ENCODE measurements at regions of chrX and their contacts with region 1.

Region 1: DNA sequence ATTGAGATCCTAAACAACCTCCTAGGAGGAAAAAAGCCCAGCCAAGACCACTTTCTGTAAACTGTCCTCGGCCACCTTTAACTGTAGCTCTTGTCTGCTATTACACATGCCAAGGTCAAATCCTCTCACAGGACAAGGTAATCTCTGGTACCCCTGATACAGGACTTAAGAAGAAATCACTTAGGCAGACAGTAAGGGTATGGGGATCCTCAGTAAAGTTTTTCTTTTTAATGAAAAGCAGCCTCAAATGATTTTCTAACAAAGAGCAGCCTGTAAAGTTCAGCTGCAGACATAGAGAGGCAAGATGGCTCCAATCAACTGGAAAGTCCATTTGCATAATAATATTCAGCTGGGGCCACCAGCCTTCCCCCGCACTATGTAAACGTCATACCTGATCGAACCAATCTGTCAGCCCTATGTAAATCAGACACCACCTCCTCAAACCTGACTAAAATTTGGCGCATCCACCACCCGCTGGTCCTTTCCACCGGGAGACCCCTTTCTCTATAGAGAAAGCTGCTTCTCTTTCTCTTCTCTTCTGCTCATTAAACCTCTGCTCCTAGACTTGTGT is 14.6 kb upstream of the MPP1 start:
- DNase-seq: peak in 2 of 4 experiments; percentile 44 to 83
- ATAC-seq: peak; percentile 73
- H3K4me3 ChIP-seq: no peak overlapping the region; the same call in 1 of the 2 replicates
- H3K27ac ChIP-seq: peak overlapping the region; percentile 97
- H3K4me1 ChIP-seq: peaks cover 22 to 37% of the 10 kb centered on the region in 2 experiments; a peak in 4 of 5 replicates
- H3K27me3 ChIP-seq: no peaks in the 10 kb centered on the region
- CTCF ChIP-seq: no peak
- EP300 ChIP-seq: no peak
- POLR2A ChIP-seq: no peak
- RAD21 ChIP-seq: no peak

Region 2: GRCh38 chrX:154370882-154371770 is 448.7 kb before region 1 on chrX:
- CTCF ChIA-PET with region 1: no interaction called
- POLR2A ChIA-PET with region 1: no interaction called
- in situ Hi-C with region 1: no loop called
- intact Hi-C with region 1: loop called (anchors 5 kb)
- DNase-seq: peak; percentile 73 to 97 (median 82)
- ATAC-seq: peak; percentile 84
- H3K4me3 ChIP-seq: peak overlapping the region; percentile 89
- H3K27ac ChIP-seq: peak overlapping the region; percentile 99
- H3K4me1 ChIP-seq: peaks cover 18 to 87% of the 10 kb centered on the region in 2 experiments
- H3K27me3 ChIP-seq: no peaks in the 10 kb centered on the region
- CTCF ChIP-seq: peak in 1 of 3 experiments; percentile 51; a peak in 2 of 6 replicates
- EP300 ChIP-seq: no peak
- POLR2A ChIP-seq: peak; percentile 99
- RAD21 ChIP-seq: no peak

Region 3: DNA sequence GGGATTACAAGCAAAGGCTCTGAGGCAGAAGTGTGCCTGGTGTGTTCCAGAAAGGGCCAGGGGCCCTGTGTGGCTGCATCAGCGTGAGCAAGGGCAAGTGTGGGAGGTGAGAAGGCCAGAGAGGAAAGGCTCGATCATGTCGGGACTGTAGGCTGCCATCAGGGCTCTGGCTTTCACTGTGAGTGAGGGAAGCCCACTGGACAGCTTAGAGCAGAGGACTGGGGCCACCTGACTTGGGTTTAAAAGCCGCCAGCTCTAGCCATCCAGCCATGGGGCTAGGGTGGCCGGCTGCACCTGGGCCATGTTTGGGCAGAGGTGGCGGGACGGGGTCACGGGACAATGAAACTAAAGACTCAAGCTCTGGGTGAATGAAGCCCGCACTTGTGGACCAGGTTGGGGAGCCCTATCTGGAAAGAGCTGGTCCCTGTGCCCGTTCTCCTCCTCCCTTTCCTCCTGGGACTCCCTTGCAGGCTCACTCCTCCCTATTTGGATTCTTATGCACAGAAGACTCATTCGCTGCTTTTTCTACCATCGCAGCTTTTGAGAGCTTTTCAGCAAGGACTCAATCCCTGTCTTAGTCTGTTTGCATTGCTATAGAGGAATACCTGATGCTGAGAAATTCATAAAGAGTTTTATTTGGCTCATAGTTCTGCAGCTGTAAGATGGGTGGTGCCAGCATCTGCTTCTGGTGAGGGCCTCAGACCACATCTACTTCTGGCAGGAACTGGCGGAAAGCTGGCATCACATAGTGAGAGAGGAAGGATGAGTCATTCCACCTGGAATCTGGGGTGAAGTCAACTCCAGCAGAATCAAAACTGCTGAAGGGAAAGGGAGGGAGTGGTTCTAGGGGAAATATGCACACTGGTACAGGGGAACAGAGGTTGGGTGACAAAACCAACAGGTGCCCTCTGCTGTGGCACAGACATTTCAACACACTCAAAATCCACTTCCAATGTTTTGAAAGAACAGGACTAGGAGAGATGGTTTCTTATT is 216.1 kb before region 1 on chrX:
- CTCF ChIA-PET with region 1: no interaction called
- POLR2A ChIA-PET with region 1: no interaction called
- in situ Hi-C with region 1: no loop called
- intact Hi-C with region 1: no loop called
- DNase-seq: no peak
- ATAC-seq: no peak
- H3K4me3 ChIP-seq: no peak overlapping the region
- H3K27ac ChIP-seq: no peak overlapping the region
- H3K4me1 ChIP-seq: peaks cover 0 to 9% of the 10 kb centered on the region in 2 experiments; a peak in 2 of 5 replicates
- H3K27me3 ChIP-seq: peaks cover 20 to 55% of the 10 kb centered on the region in 2 experiments; a peak in 4 of 5 replicates
- CTCF ChIP-seq: no peak
- EP300 ChIP-seq: no peak
- POLR2A ChIP-seq: no peak
- RAD21 ChIP-seq: no peak

Region 4: DNA sequence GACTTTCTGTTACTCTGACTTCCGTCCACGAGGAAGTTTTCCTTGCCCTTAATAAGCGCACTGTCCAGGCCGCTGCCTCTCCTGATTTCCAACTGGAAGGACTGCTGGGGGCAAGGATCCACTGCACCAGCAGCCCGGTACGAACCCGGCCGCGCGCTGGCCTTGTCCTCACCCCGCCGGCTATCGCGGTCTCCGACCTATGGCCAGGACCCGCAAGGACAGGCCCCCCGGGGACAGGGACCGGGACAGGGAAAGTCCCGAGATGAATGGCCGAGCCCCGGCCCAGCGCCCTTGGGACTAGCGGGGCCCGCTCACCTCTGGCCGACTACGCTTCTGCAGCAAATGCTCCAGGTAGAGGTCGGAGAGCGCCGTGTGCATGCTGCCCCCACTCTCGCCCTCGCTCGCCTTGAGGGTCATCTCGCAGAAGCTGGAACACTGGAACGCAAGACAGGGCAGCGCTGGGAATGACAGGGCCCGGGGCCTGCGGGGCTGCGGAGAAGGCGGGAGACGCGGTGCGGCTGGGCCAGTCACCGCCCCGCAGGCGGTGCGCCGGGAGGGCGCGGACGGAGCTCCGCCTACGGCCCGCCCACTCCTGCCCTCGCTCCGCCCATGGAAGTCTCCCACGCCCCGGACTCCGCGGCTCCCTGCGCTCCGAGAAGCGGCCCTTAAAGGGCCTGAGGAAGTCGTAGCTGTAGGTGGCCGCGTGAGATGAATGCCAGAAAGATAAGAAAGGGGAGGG is 14.7 kb before region 1 on chrX and contains the start of gene MPP1:
- CTCF ChIA-PET with region 1: no interaction called
- POLR2A ChIA-PET with region 1: interaction called, 23 read pairs
- in situ Hi-C with region 1: no loop called
- intact Hi-C with region 1: loop called (anchors 2 kb)
- DNase-seq: peak; percentile 87 to 92 (median 88)
- ATAC-seq: peak; percentile 88
- H3K4me3 ChIP-seq: peak within 1 kb of the TSS; percentile 89
- H3K27ac ChIP-seq: peak within 1 kb of the TSS; percentile 100
- H3K4me1 ChIP-seq: peaks cover 4 to 14% of the 10 kb centered on the region in 2 experiments
- H3K27me3 ChIP-seq: no peaks in the 10 kb centered on the region
- CTCF ChIP-seq: no peak
- EP300 ChIP-seq: peak; percentile 7; the same call in 1 of the 2 replicates
- POLR2A ChIP-seq: peak; percentile 83
- RAD21 ChIP-seq: no peak; a peak in 1 of 4 replicates
- polyA plus RNA-seq, gene MPP1: 271 to 305 TPM

Region 5: DNA sequence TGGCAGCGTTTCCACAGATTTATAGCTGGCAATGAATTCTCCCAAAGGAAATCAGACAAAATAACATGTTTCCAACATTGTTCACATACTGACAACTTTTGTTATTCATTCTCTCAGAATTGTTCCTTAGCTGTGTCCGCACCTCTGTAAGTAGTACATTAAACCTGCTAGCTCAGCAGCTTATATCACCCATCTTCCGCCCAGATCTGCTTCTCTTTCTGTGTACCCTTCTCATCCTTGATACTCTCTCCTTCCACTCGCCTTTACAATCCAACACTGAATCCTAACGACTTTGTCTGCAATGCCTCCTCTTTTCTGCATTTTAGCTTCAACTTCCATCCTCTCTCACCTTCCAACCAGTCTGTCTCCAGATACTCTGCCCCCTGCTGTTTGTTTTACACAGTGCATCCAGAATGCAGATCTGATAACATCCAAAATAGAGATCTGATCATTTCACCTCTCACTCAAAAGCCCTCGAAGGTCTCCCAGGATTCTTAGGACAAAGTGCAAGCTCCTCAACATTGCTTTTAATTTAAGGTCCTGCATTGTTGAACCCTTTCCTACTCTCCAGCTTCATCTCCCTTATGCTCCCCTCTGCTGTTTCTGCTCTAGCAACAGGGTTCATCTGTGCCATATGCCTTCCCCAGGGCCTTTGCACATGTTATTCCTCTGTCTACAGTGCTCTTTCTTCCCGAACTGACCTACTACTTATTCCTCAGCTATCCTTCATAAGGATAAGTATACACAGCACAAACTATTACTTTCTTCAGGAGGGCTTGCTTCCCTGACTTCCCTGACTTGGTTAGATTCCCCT is 329.1 kb after region 1 on chrX:
- CTCF ChIA-PET with region 1: no interaction called
- POLR2A ChIA-PET with region 1: no interaction called
- in situ Hi-C with region 1: no loop called
- intact Hi-C with region 1: no loop called
- DNase-seq: peak; percentile 14 to 34 (median 27)
- ATAC-seq: peak; percentile 63
- H3K4me3 ChIP-seq: no peak overlapping the region
- H3K27ac ChIP-seq: no peak overlapping the region
- H3K4me1 ChIP-seq: peaks cover 0 to 17% of the 10 kb centered on the region in 2 experiments; a peak in 4 of 5 replicates
- H3K27me3 ChIP-seq: no peaks in the 10 kb centered on the region
- CTCF ChIP-seq: peak; percentile 48 to 69 (median 58); a peak in 5 of 6 replicates
- EP300 ChIP-seq: no peak
- POLR2A ChIP-seq: no peak
- RAD21 ChIP-seq: peak; percentile 22 to 51; a peak in 2 of 4 replicates

Measured in K562 (cell line).